ENCODE measurements at regions of chr9 and their contacts with region 1.

Region 1: DNA sequence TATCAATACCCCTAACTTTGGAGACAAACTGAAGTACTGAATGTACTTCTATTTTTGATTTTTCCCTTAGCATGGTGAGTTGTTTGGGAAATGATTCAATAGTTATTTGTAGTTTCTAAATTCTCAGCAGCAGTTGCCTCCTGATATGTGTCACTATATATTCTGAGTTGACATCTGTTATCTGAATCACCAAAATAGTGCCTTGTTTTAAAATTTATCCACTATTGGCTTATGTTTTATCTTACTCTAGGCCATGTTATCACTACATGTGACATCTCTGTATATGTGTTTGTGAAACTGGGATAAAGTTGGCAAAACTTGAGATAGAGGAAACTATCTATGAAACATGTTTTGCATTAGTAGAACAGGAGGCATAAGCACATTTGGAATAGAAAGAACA is 317.6 kb downstream of the TLE4 start:
- DNase-seq: no peak
- ATAC-seq: no peak
- H3K4me3 ChIP-seq: no peak overlapping the region
- H3K27ac ChIP-seq: no peak overlapping the region
- H3K4me1 ChIP-seq: no peaks in the 10 kb centered on the region
- H3K27me3 ChIP-seq: no peaks in the 10 kb centered on the region

Region 2: GRCh38 chr9:79917421-79917820 is 28.1 kb after region 1 on chr9:
- intact Hi-C with region 1: loop called in 1 of 4 experiments (anchors 2 kb)
- DNase-seq: no peak
- ATAC-seq: no peak
- H3K4me3 ChIP-seq: no peak overlapping the region
- H3K27ac ChIP-seq: no peak overlapping the region
- H3K4me1 ChIP-seq: no peaks in the 10 kb centered on the region
- H3K27me3 ChIP-seq: no peaks in the 10 kb centered on the region

Region 3: DNA sequence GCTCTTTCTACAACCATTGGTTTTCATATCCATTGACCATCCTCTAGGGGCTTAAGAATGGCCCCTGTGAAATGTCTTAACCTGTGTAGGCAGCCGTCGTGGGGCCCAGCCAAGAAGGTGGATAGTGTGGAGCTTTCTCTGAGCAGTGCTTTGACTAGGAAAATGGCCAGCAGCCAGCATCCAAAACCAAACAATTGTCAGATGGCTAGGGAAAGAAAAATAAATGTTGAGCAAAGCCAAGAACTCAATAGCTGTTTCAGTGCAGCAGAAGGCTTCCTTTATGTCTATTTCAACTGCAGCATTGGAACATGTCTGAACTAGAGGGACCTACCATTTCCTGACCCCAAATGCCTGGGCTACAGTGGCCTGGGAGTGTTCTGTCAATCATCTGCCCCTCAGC is 57.3 kb after region 1 on chr9:
- intact Hi-C with region 1: no loop called
- DNase-seq: peak in 1 of 3 donors; percentile 38
- ATAC-seq: peak in 1 of 2 donors; percentile 50
- H3K4me3 ChIP-seq: no peak overlapping the region
- H3K27ac ChIP-seq: no peak overlapping the region
- H3K4me1 ChIP-seq: no peaks in the 10 kb centered on the region
- H3K27me3 ChIP-seq: no peaks in the 10 kb centered on the region